RWPE1 (cell line): ENCODE measurements at regions of chr7 and their contacts with region 1.

Region 1: GRCh38 chr7:75599244-75599781 is 107.2 kb downstream of the SPDYE5 start:
- DNase-seq: no peak
- H3K27ac ChIP-seq: no peak overlapping the region
- CTCF ChIP-seq: no peak

Region 2: DNA sequence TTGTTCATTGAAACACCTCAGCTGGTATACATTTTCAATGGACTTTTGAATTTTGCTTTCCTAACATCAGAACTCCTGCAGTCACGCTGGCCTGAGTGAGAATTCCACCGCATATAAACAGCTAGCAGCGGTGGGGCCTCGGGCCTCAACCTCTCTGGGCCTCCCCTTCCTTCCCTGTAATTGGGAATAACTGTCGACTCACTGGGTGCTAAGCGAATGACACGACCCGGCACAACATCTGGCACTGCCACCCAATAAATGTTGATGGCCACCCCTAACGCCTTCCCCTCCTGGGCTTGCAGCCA is 526.4 kb before region 1 on chr7:
- CTCF ChIA-PET with region 1: no interaction called
- POLR2A ChIA-PET with region 1: no interaction called
- DNase-seq: peak; percentile 27
- H3K27ac ChIP-seq: peak overlapping the region; percentile 91
- CTCF ChIP-seq: no peak

Region 3: GRCh38 chr7:75531359-75531821 is 67.9 kb before region 1 on chr7:
- CTCF ChIA-PET with region 1: no interaction called
- POLR2A ChIA-PET with region 1: interaction called, 13 read pairs
- DNase-seq: peak; percentile 49
- H3K27ac ChIP-seq: peak overlapping the region; percentile 1
- CTCF ChIP-seq: no peak

Region 4: DNA sequence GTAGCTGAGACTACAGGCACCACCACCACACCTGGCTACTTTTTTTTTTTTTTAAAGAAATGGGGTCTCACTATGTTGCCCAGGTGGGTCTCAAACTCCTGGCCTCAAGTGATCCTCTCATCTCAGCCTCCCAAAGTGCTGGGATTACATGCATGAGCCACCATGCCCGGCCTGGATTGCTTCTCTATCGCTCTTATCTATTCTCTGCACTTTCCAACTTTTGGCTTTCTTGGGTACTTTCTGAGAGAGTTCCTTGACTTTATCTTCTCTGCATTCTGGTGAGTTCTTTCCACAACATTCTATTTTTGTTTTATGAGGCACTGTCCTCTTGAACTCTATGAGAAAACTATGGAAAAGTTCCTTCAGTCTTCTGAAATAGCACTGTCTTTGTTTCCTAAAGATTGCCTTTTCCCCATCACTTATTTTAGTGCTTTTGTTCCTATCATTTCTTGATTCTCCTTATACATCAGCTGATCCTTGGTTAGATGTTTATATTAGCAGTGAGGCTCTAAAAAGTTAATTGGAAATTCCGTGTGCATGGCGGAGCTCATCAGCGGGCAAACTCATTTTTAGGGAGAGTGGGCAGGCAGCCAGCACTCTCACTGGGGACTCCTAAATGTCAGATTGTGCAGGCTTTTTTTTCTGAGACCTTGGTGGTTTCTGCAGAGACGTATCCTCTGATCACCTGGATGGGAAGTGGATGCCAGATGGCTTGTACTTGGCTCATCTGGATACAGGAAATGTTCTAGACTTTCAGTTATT is 95.5 kb after region 1 on chr7:
- CTCF ChIA-PET with region 1: no interaction called
- POLR2A ChIA-PET with region 1: no interaction called
- DNase-seq: no peak
- H3K27ac ChIP-seq: no peak overlapping the region
- CTCF ChIP-seq: no peak

Region 5: DNA sequence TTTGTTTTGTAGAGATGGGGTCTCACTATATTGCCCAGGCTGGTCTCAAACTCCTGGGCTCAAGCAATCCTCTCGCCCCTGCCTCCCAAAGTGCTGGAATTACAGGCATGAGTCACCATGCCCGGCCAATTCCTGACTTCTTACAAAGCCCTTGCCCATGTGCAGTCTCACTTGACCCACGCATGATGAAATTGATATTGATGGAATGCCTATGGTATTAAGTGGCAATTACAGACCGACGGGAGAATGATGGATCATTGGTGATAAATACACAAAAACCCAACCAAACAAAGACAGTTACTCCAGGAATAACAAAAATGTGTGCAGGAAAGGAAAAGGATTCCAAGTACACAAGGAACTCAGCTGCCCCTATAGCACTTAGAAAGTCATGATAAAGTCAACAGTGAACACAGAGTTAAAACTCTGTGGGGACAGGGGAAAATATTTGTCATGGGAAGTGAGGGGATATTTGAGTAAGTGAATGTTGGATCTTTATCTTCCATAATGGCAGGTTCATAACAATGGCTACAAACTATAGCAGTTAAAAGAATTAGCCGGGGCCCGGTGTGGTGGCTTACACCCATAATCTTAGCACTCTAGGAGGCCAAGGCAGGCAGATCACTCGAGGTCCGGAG is 117.8 kb after region 1 on chr7:
- CTCF ChIA-PET with region 1: no interaction called
- POLR2A ChIA-PET with region 1: no interaction called
- DNase-seq: peak; percentile 41
- H3K27ac ChIP-seq: no peak overlapping the region
- CTCF ChIP-seq: no peak